Natural killer cell (primary cell): ENCODE measurements at regions of chr1 and their contacts with region 1.

Region 1: DNA sequence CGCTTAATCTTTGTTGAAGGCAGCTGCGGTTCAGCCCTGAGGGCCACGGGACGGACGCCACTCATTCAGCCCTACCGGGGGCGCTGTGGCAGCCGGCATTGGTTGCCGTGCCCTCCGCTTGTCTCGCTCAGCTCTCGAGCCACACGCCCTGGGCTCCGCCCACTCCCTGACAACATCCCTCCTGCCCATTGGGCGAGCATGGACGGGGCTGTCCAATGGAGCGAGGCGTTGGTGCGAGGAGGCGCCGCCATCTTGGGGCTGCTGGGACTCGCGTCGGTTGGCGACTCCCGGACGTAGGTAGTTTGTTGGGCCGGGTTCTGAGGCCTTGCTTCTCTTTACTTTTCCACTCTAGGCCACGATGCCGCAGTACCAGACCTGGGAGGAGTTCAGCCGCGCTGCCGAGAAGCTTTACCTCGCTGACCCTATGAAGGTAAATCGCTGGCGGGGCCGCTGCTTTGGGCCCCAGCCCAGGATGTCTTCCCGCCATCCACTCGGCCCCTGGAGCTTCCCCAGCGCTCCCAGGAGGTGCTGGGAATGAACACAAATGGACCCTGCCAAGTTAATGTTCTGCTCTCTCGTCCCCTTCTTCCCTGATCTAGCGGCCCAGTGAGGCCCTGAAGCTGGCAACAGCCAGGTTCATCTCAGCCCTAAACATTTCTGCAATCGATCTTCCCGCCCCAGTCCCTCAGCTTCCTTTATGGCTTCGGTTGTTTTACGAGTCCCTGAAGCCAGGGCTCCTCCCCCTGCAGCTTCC is at the start of gene SRP9:
- DNase-seq: peak; percentile 98 to 100
- ATAC-seq: peak; percentile 95 to 100 (median 97)
- H3K4me3 ChIP-seq: peak within 1 kb of the TSS; percentile 63
- H3K4me3 Mint-ChIP-seq: no peak within 1 kb of the TSS
- H3K27ac ChIP-seq: peak within 1 kb of the TSS; percentile 90
- H3K27ac Mint-ChIP-seq: no peak within 1 kb of the TSS
- H3K4me1 ChIP-seq: peaks cover 22% of the 10 kb centered on the region
- H3K4me1 Mint-ChIP-seq: peaks cover 21 to 23% of the 10 kb centered on the region in 2 donors
- H3K27me3 ChIP-seq: no peaks in the 10 kb centered on the region
- H3K27me3 Mint-ChIP-seq: no peaks in the 10 kb centered on the region
- CTCF ChIP-seq: peak; percentile 85
- total RNA-seq, gene SRP9: 83.1 to 116 (median 93.0) TPM

Region 2: GRCh38 chr1:225474986-225475820 is 302.6 kb before region 1 on chr1:
- intact Hi-C with region 1: loop called (anchors 5 kb)
- DNase-seq: peak; percentile 81 to 85
- ATAC-seq: peak; percentile 92 to 96 (median 93)
- H3K4me3 ChIP-seq: no peak overlapping the region
- H3K4me3 Mint-ChIP-seq: no peak overlapping the region
- H3K27ac ChIP-seq: no peak overlapping the region
- H3K27ac Mint-ChIP-seq: peak overlapping the region; percentile 62 to 77
- H3K4me1 ChIP-seq: peaks cover 56% of the 10 kb centered on the region
- H3K4me1 Mint-ChIP-seq: peaks cover 35 to 48% of the 10 kb centered on the region in 2 donors
- H3K27me3 ChIP-seq: no peaks in the 10 kb centered on the region
- H3K27me3 Mint-ChIP-seq: no peaks in the 10 kb centered on the region
- CTCF ChIP-seq: peak; percentile 100

Region 3: GRCh38 chr1:225851805-225852204 is 74.0 kb after region 1 on chr1:
- intact Hi-C with region 1: loop called (anchors 5 kb)
- DNase-seq: peak in 1 of 2 donors; percentile 55
- ATAC-seq: peak; percentile 25 to 31 (median 28)
- H3K4me3 ChIP-seq: no peak overlapping the region
- H3K4me3 Mint-ChIP-seq: no peak overlapping the region
- H3K27ac ChIP-seq: peak overlapping the region; percentile 3
- H3K27ac Mint-ChIP-seq: peak overlapping the region; percentile 75 to 87
- H3K4me1 ChIP-seq: peaks cover 68% of the 10 kb centered on the region
- H3K4me1 Mint-ChIP-seq: peaks cover 46 to 72% of the 10 kb centered on the region in 2 donors
- H3K27me3 ChIP-seq: no peaks in the 10 kb centered on the region
- H3K27me3 Mint-ChIP-seq: no peaks in the 10 kb centered on the region
- CTCF ChIP-seq: no peak

Region 4: DNA sequence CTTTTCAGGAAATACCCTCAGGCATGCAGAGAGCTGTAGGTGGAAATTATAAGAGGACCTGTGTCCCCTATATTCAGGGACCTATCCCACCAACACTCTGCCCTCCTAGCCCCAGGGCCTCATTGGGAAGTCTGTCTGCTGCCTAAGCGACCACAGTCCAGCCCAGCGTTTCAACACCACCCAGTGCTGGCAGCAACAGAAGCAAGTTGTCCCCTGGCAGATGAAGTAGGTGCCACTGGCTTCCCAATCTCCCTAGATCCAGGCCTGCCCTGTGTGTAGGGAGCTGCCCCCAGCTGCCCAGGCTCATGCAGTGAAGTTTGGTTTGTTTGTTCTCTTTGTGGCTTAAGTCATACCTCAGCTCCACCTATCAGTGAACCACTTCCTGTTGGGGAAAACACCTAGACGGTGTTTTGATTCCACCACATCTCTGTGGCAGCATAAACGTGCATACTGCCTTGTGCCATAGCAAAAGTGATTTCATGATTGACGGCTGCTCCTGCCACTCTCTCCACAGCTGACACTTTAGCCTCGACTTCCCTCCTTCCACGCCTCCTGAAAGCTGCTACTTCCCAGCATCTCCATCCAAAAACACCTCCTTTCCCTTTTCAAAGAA is 119.3 kb after region 1 on chr1:
- intact Hi-C with region 1: loop called (anchors 5 kb)
- DNase-seq: peak; percentile 48 to 94
- ATAC-seq: peak; percentile 95 to 99 (median 97)
- H3K4me3 ChIP-seq: no peak overlapping the region
- H3K4me3 Mint-ChIP-seq: peak overlapping the region; percentile 75
- H3K27ac ChIP-seq: peak overlapping the region; percentile 81
- H3K27ac Mint-ChIP-seq: peak overlapping the region; percentile 84 to 87
- H3K4me1 ChIP-seq: peaks cover 34% of the 10 kb centered on the region
- H3K4me1 Mint-ChIP-seq: peaks cover 22 to 25% of the 10 kb centered on the region in 2 donors
- H3K27me3 ChIP-seq: no peaks in the 10 kb centered on the region
- H3K27me3 Mint-ChIP-seq: peaks cover 0 to 6% of the 10 kb centered on the region in 2 donors
- CTCF ChIP-seq: no peak

Region 5: DNA sequence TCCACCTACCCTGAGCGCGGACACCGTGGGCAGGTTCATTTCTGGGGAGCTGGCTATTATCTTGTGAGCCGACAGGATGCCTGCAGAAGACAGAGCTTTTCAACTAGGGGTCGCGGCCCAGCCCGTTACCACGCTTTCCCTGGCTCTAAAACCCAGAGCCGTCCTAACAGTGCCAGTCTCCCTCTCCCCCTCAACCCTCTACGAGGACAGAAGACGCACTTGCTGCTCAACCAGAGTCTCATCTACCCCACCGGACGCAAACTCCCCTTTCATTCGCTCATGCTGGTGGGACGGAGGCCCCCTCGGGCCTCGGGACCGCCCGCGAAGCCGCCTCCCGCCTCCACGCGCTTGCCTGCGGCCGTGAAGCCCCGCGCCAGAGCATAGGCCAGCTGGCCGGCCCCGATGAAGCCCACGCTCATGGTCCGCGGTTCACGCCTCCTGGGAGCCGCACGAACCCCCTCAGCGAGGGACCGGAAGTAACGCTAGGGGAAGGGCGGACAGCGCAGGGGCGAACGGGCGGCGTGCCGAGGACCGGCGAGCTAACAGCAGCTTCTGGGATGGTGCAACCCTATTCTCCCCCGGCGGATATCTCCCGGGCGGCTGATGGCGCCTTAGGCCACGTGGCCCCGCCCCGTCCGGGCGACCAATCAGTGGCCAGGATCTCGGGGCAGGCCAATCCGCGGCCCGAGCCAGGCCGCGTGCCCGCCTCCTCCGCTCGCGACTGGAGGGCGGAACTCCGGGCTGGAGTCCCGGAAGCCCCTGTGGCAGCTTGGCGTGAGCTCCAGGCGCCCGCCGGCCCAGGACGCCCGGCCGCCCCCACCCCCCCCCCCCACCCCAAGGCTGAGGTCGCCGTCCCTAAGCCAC is 146.2 kb after region 1 on chr1 and contains the start of gene PYCR2:
- intact Hi-C with region 1: loop called (anchors 5 kb)
- DNase-seq: peak; percentile 98
- ATAC-seq: peak; percentile 96 to 99 (median 97)
- H3K4me3 ChIP-seq: peak within 1 kb of the TSS; percentile 89
- H3K4me3 Mint-ChIP-seq: peak within 1 kb of the TSS; percentile 89
- H3K27ac ChIP-seq: peak within 1 kb of the TSS; percentile 90
- H3K27ac Mint-ChIP-seq: peak within 1 kb of the TSS; percentile 87 to 97
- H3K4me1 ChIP-seq: peaks cover 32% of the 10 kb centered on the region
- H3K4me1 Mint-ChIP-seq: peaks cover 19 to 37% of the 10 kb centered on the region in 2 donors
- H3K27me3 ChIP-seq: no peaks in the 10 kb centered on the region
- H3K27me3 Mint-ChIP-seq: no peaks in the 10 kb centered on the region
- CTCF ChIP-seq: no peak
- total RNA-seq, gene PYCR2: 57.7 to 74.5 (median 62.6) TPM

Region 6: DNA sequence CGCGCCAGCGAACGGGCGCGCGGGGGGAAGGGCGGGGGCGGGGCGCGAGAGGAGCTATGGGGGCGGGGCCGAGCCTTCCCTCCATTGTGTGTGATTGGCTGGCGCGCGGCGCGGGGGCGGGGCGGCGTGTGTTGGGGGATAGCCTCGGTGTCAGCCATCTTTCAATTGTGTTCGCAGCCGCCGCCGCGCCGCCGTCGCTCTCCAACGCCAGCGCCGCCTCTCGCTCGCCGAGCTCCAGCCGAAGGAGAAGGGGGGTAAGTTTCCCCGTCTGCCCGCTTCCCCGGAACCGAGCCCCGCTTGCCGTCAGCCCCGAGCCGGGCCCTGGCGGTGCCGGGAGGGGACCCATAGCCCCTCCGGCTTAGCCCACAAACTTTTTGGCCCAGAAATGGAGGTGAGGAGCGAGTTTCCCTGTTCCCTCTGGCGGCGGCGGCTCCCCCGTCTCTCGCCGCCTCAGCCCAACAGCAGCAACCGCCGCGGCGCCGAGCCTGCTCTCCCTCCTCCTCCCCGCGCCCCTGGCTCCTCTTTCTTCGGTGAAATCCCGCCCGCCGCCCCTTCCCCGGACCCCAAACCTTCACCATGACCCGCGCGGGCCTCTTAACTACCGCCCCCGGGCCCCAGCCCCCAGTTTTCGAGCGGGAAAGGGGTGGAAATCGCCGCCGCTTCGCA is 284.9 kb after region 1 on chr1 and contains the start of gene H3-3A:
- intact Hi-C with region 1: loop called (anchors 5 kb)
- DNase-seq: peak; percentile 97 to 98
- ATAC-seq: peak; percentile 81 to 96 (median 84)
- H3K4me3 ChIP-seq: peak within 1 kb of the TSS; percentile 63
- H3K4me3 Mint-ChIP-seq: peak within 1 kb of the TSS; percentile 100
- H3K27ac ChIP-seq: peak within 1 kb of the TSS; percentile 96
- H3K27ac Mint-ChIP-seq: peak within 1 kb of the TSS; percentile 99
- H3K4me1 ChIP-seq: peaks cover 18% of the 10 kb centered on the region
- H3K4me1 Mint-ChIP-seq: peaks cover 50% of the 10 kb centered on the region in 2 donors
- H3K27me3 ChIP-seq: no peaks in the 10 kb centered on the region
- H3K27me3 Mint-ChIP-seq: no peaks in the 10 kb centered on the region
- CTCF ChIP-seq: no peak
- total RNA-seq, gene H3-3A: 490 to 616 (median 522) TPM